ENCODE measurements at regions of chr19 and their contacts with region 1.

Region 1: DNA sequence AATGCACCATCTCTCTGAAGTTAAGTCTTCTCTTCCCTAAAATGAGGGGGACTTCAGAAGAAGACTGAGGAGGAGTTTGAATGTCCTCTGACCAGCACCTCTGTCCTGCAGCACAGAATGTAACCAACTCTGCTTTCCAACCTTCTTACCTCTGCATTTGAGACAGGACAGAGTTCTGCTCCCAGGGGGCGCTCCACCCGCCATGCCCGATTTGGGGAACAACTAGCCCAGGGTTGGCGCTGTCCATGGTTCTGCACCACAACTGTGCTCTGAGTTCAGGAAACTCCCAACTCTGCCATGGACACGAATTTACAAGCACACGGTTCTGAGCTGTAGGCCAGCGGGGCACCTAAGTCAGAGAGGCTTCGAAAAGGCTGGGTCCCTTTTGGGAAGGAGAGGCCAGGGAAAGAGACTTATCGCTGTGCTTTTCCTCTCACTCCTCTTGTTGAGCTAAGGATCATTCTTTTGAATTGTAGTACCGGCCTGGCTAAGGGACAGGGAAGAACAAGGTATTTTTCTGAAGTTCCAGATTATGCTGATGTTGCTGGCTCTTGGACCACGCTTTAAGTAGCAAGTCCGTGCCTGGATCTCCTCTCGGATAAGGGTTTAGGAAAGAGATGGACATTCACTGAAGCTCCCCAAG is 22.2 kb downstream of the SIGLEC5 start:
- DNase-seq: peak; percentile 83
- H3K4me3 ChIP-seq: no peak overlapping the region
- H3K27ac ChIP-seq: no peak overlapping the region
- H3K4me1 ChIP-seq: no peaks in the 10 kb centered on the region
- H3K27me3 ChIP-seq: no peaks in the 10 kb centered on the region
- CTCF ChIP-seq: peak; percentile 90

Region 2: GRCh38 chr19:51654783-51655182 is 46.7 kb after region 1 on chr19:
- CTCF ChIA-PET with region 1: interaction called, 4 read pairs
- POLR2A ChIA-PET with region 1: no interaction called
- intact Hi-C with region 1: loop called (anchors 5 kb)
- DNase-seq: no peak
- H3K4me3 ChIP-seq: no peak overlapping the region
- H3K27ac ChIP-seq: no peak overlapping the region
- H3K4me1 ChIP-seq: no peaks in the 10 kb centered on the region
- H3K27me3 ChIP-seq: peaks cover 6% of the 10 kb centered on the region
- CTCF ChIP-seq: peak; percentile 30; the same call in 1 of the 2 replicates

Measured in A673 (cell line).